Endothelial cell of umbilical vein (primary cell): ENCODE measurements at regions of chr18 and their contacts with region 1.

Region 1: GRCh38 chr18:40555914-40556313 is 1399.1 kb upstream of the PIK3C3 start:
- DNase-seq: no peak
- H3K4me3 ChIP-seq: no peak overlapping the region
- H3K27ac ChIP-seq: no peak overlapping the region
- H3K4me1 ChIP-seq: no peaks in the 10 kb centered on the region
- H3K27me3 ChIP-seq: no peaks in the 10 kb centered on the region
- CTCF ChIP-seq: no peak
- POLR2A ChIP-seq: no peak

Region 2: GRCh38 chr18:40272630-40273231 is 283.2 kb before region 1 on chr18:
- CTCF ChIA-PET with region 1: no interaction called
- POLR2A ChIA-PET with region 1: no interaction called
- dilution Hi-C with region 1: no loop called
- intact Hi-C with region 1: no loop called
- DNase-seq: no peak
- H3K4me3 ChIP-seq: no peak overlapping the region
- H3K27ac ChIP-seq: no peak overlapping the region
- H3K4me1 ChIP-seq: no peaks in the 10 kb centered on the region
- H3K27me3 ChIP-seq: no peaks in the 10 kb centered on the region
- CTCF ChIP-seq: no peak
- POLR2A ChIP-seq: no peak

Region 3: DNA sequence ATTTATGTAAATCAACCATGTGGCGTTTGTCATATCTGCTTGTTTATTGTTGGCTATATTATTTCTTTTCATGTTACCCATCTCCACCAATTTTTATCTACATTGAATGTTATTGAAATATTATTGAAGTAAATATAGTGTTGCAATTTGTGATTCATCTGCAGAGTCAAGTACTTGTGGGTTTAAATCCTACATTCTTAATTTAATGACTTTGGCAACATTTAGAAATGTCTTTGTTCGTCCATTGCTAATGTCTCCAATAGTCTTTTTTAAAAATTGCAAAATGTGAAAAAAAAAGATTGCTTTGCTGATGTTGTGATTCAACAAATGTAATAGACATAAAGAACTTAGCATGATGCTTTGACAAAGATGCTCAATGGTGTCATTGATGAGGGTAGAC is 173.7 kb before region 1 on chr18:
- CTCF ChIA-PET with region 1: no interaction called
- POLR2A ChIA-PET with region 1: no interaction called
- dilution Hi-C with region 1: no loop called
- intact Hi-C with region 1: no loop called
- DNase-seq: no peak
- H3K4me3 ChIP-seq: no peak overlapping the region
- H3K27ac ChIP-seq: no peak overlapping the region
- H3K4me1 ChIP-seq: no peaks in the 10 kb centered on the region
- H3K27me3 ChIP-seq: no peaks in the 10 kb centered on the region
- CTCF ChIP-seq: no peak
- POLR2A ChIP-seq: no peak

Region 4: DNA sequence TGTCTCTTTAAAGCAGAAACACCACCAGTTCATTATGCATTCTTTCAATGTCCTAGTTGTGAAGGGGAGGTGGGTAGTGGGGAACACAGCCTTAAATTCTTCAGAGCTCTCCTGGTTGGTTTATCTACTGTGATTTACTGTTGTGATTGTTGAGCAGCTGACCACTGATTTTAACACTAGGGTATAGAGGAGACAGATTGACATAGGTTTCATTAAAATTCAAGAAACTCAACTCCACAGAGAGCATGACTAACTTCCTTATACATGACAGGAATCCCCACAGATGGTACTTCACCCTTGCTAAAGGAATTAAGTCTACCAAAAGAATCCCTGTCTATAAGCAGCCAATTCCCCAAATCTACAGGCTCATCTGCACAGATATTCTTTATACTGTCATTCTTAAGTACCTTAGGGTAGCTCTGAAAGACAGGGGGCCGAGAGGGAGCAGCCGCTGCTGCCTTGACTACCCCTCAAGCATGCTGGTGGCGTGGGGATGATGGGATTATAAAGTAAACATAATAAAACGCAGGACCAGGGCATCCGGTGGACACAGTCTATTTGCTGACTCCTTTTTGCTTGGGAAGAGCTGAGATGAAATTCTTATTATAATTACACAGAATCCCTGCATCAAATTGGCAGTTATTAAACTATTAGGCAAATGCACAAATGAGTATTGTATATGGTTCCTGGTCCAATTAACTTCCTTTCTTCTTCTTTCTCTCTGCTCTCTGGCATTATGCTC is 21.5 kb after region 1 on chr18:
- CTCF ChIA-PET with region 1: no interaction called
- POLR2A ChIA-PET with region 1: no interaction called
- dilution Hi-C with region 1: no loop called
- intact Hi-C with region 1: loop called (anchors 1 kb)
- DNase-seq: no peak
- H3K4me3 ChIP-seq: no peak overlapping the region
- H3K27ac ChIP-seq: no peak overlapping the region
- H3K4me1 ChIP-seq: no peaks in the 10 kb centered on the region
- H3K27me3 ChIP-seq: no peaks in the 10 kb centered on the region
- CTCF ChIP-seq: no peak
- POLR2A ChIP-seq: no peak

Region 5: DNA sequence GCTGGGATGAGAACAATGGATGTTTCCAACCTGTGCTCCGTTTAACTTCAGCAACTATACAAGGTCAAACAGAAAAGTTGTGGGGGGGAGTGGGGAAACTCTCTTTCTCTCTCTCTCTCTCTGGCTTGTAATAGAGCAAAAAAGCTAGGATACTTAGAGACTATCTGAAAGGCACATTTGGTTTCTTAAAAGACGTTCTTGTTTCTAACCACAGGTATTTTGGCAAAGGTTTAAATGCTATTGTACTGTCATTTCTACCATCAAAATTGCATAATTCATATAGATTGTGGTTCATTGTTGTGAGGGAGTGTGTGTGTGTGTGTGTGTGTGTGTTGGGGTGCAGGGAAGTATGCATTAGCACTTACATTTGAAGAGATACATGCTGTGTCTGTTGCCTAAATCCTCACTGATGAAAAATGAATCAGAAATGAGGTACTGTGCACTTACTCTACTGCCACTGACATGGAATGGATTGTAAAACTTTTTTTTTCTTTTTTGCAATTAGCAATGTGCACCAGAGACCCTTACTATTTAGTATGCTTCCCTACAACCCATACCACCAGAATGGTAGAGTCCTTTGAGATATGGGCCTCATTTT is 558.1 kb after region 1 on chr18:
- CTCF ChIA-PET with region 1: no interaction called
- POLR2A ChIA-PET with region 1: no interaction called
- dilution Hi-C with region 1: no loop called
- intact Hi-C with region 1: no loop called
- DNase-seq: no peak
- H3K4me3 ChIP-seq: no peak overlapping the region
- H3K27ac ChIP-seq: no peak overlapping the region
- H3K4me1 ChIP-seq: no peaks in the 10 kb centered on the region
- H3K27me3 ChIP-seq: no peaks in the 10 kb centered on the region
- CTCF ChIP-seq: no peak
- POLR2A ChIP-seq: no peak